ENCODE measurements at regions of chr11 and their contacts with region 1.

Region 1: DNA sequence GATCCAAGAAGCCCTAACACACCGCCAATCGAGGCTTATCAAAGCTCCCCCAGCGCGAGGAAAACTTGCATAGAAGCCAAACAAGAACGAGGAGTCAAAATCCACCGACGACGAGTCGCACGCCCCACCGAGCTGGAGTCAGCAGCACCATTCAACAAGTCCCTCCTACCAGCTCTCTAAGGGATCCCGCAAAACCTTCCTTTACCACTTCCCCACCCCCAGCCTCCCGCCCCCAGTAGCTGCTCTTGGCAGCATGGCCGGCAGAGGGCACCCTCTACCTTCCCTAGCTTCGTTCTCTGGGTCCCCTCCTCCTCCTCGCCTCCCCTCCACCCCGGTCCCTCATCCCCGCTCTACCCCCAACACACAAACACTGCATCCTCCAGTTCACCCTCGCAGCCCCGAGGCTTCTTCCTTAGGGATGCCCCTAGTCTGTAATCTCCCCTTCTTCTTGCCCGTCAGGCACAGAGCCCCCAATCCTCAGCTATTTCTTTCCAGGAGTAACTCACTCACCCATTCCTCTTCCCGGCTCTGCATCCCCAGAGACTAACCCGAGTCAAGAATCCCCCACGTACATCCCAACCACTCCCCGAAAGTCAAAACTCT is 1.3 kb downstream of the BDNF start:
- DNase-seq: peak in 6 of 9 donors; percentile 5 to 64 (median 24)
- ATAC-seq: peak; percentile 69
- H3K4me3 ChIP-seq: no peak overlapping the region
- H3K4me3 Mint-ChIP-seq: peak overlapping the region; percentile 35 to 89 (median 62)
- H3K27ac ChIP-seq: no peak overlapping the region
- H3K27ac Mint-ChIP-seq: no peak overlapping the region
- H3K4me1 ChIP-seq: peaks cover 0 to 13% of the 10 kb centered on the region in 2 donors
- H3K4me1 Mint-ChIP-seq: peaks cover 12 to 32% (median 25%) of the 10 kb centered on the region in 7 donors
- H3K27me3 ChIP-seq: peaks cover 5 to 15% of the 10 kb centered on the region in 2 donors
- H3K27me3 Mint-ChIP-seq: peaks cover 66 to 82% (median 75%) of the 10 kb centered on the region in 5 donors

Region 2: DNA sequence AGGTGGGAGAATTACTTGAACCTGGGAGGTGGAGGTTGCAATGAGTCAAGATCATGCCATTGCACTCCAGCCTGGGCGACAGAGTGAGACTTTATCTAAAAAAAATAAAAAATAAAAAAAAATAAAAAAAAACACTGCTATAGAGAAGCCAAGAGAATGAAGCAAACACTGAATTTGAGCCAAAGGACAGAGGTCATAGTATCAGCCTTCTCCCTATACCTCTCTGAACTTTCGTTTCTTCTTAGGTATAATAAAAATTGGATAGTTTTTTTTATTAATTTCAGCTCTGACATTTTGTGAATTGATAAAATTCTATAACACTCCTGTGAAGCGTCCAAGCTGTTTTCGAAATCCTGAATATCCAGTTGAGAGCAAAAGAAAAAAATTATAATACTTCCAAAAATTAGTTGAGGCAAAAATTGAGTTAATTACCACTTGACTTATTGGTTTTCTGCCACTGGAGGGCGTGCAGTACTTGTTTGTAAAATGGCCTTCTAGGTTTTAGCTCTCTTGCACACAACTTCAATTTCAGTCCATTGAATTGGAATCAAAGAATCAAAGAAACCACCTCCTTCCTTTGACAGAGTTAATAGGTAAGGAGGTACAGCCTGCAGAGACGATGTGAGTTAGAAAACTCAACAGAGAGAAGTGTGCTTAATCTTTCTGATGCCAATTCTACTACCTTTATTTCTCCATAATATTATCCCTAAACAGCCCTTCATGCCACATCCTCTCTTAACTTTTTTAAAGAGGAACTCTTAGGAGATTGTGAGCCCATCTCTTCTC is 515.1 kb before region 1 on chr11:
- CTCF ChIA-PET with region 1: no interaction called
- POLR2A ChIA-PET with region 1: no interaction called
- intact Hi-C with region 1: no loop called
- DNase-seq: peak in 7 of 9 donors; percentile 14 to 45 (median 29)
- ATAC-seq: peak; percentile 46
- H3K4me3 ChIP-seq: no peak overlapping the region
- H3K4me3 Mint-ChIP-seq: no peak overlapping the region
- H3K27ac ChIP-seq: no peak overlapping the region
- H3K27ac Mint-ChIP-seq: no peak overlapping the region
- H3K4me1 ChIP-seq: no peaks in the 10 kb centered on the region
- H3K4me1 Mint-ChIP-seq: no peaks in the 10 kb centered on the region
- H3K27me3 ChIP-seq: no peaks in the 10 kb centered on the region
- H3K27me3 Mint-ChIP-seq: peaks cover 3 to 19% (median 16%) of the 10 kb centered on the region in 5 donors

Region 3: GRCh38 chr11:27710536-27710935 is 11.6 kb after region 1 on chr11:
- CTCF ChIA-PET with region 1: no interaction called
- POLR2A ChIA-PET with region 1: no interaction called
- intact Hi-C with region 1: no loop called
- DNase-seq: no peak
- ATAC-seq: no peak
- H3K4me3 ChIP-seq: no peak overlapping the region
- H3K4me3 Mint-ChIP-seq: no peak overlapping the region
- H3K27ac ChIP-seq: no peak overlapping the region
- H3K27ac Mint-ChIP-seq: no peak overlapping the region
- H3K4me1 ChIP-seq: no peaks in the 10 kb centered on the region
- H3K4me1 Mint-ChIP-seq: no peaks in the 10 kb centered on the region
- H3K27me3 ChIP-seq: peaks cover 0 to 5% of the 10 kb centered on the region in 2 donors
- H3K27me3 Mint-ChIP-seq: peaks cover 7 to 60% (median 31%) of the 10 kb centered on the region in 5 donors

Region 4: DNA sequence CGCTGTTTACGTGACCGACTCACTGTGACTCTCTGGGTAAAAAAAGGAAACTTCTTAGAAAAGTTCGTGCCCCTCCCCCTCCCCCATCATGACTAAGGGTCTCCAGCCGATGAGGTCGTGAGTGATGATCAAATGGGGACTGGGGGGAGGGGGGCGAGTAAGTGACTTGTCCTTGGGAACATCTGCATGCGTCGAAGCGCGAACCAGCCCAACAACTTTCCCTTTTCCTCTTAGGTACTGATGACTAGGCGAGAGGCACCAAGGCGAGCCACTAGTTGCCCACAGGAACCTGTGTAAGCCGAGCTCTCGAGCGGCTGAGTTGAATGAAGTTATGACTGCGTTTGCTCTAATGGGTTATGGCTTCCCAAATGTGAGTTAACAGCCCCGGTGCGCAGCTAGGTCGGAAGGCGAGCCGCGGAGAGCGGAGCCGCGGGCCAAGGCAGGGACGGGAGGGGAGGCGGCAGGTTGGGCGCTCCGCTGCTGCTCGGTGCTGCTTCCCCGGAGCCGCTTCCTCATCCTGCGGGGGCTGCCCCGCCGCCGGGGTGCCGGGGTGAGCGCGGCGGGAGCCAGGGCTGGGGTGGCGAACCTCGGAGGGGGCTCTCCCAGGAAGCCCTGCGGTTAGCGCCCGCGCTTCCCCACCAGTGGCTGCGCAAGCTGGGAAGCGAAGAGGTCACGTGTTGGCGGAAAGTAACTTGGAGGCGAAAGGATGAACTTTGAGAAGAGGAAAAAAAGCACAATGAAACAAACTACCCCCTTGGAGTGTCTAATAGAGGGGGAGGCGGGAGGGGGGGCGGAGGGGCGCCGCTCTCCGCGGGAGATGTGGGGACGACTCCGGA is 23.4 kb after region 1 on chr11:
- CTCF ChIA-PET with region 1: no interaction called
- POLR2A ChIA-PET with region 1: no interaction called
- intact Hi-C with region 1: loop called in 1 of 2 experiments (anchors 1 kb)
- DNase-seq: peak in 1 of 9 donors; percentile 24
- ATAC-seq: no peak
- H3K4me3 ChIP-seq: no peak overlapping the region
- H3K4me3 Mint-ChIP-seq: peak overlapping the region in 6 of 10 donors; percentile 11 to 71 (median 40)
- H3K27ac ChIP-seq: no peak overlapping the region
- H3K27ac Mint-ChIP-seq: no peak overlapping the region
- H3K4me1 ChIP-seq: no peaks in the 10 kb centered on the region
- H3K4me1 Mint-ChIP-seq: peaks cover 0 to 16% (median 8%) of the 10 kb centered on the region in 7 donors
- H3K27me3 ChIP-seq: no peaks in the 10 kb centered on the region
- H3K27me3 Mint-ChIP-seq: peaks cover 59 to 77% (median 72%) of the 10 kb centered on the region in 5 donors

Region 5: DNA sequence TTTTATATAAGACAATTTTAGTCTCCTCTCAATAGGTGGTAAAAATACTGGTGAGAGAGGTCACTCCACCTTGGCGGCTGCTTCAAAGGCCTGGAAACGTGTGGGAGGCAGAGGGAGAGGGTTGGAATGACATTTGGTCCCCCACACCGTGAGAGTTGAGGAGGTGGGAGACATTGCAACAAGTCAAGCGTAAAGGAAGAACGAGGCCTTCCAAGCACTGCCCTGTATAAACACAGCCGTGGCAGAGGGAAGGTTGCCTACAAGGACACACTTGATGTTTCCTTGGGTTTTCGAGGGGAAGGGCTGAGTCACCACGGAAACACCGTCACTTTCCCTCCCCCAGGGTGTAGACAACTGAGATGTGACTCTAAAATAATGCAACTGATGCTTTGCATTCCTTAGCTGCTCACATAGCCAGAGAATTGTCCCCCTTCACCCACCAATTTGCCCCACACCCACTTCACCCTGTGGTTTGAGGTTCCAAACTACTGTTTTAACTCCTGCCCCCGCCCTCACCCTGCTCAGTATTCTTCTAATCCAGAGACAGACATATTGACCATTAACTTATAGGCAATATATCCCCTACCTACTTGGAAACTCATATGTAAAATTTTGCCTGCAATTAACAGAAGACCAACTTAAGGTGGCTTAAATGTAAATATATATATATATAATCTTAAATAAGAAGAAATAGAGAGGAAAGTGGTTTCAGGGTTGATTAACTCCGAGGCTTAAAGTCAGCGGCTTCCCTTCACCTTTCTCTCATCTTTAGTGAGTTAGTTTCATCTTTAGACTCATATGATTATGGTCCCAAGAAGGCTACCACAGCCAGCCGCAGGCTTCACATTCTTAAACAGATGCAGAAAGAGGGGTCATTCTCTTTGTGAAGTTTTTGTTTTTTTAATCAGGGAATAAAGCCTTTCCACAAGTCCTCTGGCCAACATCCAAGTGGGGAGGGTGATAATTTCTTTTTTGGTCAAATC is 55.4 kb after region 1 on chr11:
- CTCF ChIA-PET with region 1: no interaction called
- POLR2A ChIA-PET with region 1: no interaction called
- intact Hi-C with region 1: no loop called
- DNase-seq: no peak
- ATAC-seq: no peak
- H3K4me3 ChIP-seq: no peak overlapping the region
- H3K4me3 Mint-ChIP-seq: no peak overlapping the region
- H3K27ac ChIP-seq: no peak overlapping the region
- H3K27ac Mint-ChIP-seq: no peak overlapping the region
- H3K4me1 ChIP-seq: no peaks in the 10 kb centered on the region
- H3K4me1 Mint-ChIP-seq: no peaks in the 10 kb centered on the region
- H3K27me3 ChIP-seq: no peaks in the 10 kb centered on the region
- H3K27me3 Mint-ChIP-seq: peaks cover 0 to 6% (median 0%) of the 10 kb centered on the region in 5 donors

Region 6: DNA sequence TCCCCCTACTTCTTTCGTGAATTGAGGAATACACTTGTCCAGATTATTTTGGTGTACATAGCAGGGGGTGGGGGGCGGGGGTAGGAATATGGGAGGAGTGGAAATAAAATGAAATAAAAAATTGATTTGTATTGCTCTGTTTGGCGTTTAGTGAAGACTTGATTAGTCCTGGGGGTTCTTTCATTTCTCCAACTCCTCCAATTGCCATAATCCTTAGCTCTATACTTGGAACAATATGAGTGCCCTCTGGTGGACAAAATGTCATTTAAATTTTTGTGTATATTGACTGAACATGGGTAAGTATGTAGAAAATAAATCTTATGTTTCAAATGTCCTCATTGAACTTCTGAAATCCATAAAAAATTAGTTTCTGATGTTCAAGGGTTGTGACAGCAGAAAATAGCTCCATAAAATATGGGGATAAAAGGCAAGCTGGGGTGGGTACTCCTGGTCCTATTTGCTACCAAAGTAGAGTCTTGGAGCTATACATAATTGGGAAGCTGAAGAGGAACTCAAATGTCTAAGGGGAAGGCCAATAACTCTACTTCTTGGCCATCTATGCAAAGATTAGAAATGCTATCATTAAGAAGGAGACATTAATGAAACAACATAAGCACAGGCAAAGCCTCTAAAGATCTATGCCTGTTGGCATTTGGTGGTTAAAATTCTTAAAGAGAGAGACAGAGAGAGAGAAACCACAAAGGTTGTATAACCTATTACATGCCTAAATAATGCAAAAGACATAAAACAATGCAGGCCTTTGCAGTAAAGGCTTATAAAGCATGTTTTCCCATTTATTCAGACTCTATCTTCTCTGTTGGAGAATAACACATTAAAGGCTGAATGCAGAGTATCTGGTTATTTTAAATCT is 830.8 kb after region 1 on chr11:
- CTCF ChIA-PET with region 1: no interaction called
- POLR2A ChIA-PET with region 1: no interaction called
- intact Hi-C with region 1: loop called in 1 of 2 experiments (anchors 2 kb)
- DNase-seq: no peak
- ATAC-seq: no peak
- H3K4me3 ChIP-seq: no peak overlapping the region
- H3K4me3 Mint-ChIP-seq: no peak overlapping the region
- H3K27ac ChIP-seq: no peak overlapping the region
- H3K27ac Mint-ChIP-seq: no peak overlapping the region
- H3K4me1 ChIP-seq: no peaks in the 10 kb centered on the region
- H3K4me1 Mint-ChIP-seq: no peaks in the 10 kb centered on the region
- H3K27me3 ChIP-seq: no peaks in the 10 kb centered on the region
- H3K27me3 Mint-ChIP-seq: no peaks in the 10 kb centered on the region

Region 7: GRCh38 chr11:28697920-28698827 is 999.2 kb after region 1 on chr11:
- CTCF ChIA-PET with region 1: no interaction called
- POLR2A ChIA-PET with region 1: no interaction called
- intact Hi-C with region 1: loop called in 1 of 2 experiments (anchors 1 kb)
- DNase-seq: peak in 1 of 9 donors; percentile 28
- ATAC-seq: no peak
- H3K4me3 ChIP-seq: no peak overlapping the region
- H3K4me3 Mint-ChIP-seq: no peak overlapping the region
- H3K27ac ChIP-seq: no peak overlapping the region
- H3K27ac Mint-ChIP-seq: no peak overlapping the region
- H3K4me1 ChIP-seq: no peaks in the 10 kb centered on the region
- H3K4me1 Mint-ChIP-seq: no peaks in the 10 kb centered on the region
- H3K27me3 ChIP-seq: no peaks in the 10 kb centered on the region
- H3K27me3 Mint-ChIP-seq: no peaks in the 10 kb centered on the region

Region 8: GRCh38 chr11:29333993-29334775 is 1635.2 kb after region 1 on chr11:
- CTCF ChIA-PET with region 1: no interaction called
- POLR2A ChIA-PET with region 1: no interaction called
- intact Hi-C with region 1: loop called in 1 of 2 experiments (anchors 10 kb)
- DNase-seq: no peak
- ATAC-seq: no peak
- H3K4me3 ChIP-seq: no peak overlapping the region
- H3K4me3 Mint-ChIP-seq: no peak overlapping the region
- H3K27ac ChIP-seq: no peak overlapping the region
- H3K27ac Mint-ChIP-seq: no peak overlapping the region
- H3K4me1 ChIP-seq: no peaks in the 10 kb centered on the region
- H3K4me1 Mint-ChIP-seq: no peaks in the 10 kb centered on the region
- H3K27me3 ChIP-seq: no peaks in the 10 kb centered on the region
- H3K27me3 Mint-ChIP-seq: no peaks in the 10 kb centered on the region

Measured in naive thymus-derived CD4-positive, alpha-beta T cell (primary cell).